ENCODE measurements at regions of chr11 and their contacts with region 1.

Region 1: DNA sequence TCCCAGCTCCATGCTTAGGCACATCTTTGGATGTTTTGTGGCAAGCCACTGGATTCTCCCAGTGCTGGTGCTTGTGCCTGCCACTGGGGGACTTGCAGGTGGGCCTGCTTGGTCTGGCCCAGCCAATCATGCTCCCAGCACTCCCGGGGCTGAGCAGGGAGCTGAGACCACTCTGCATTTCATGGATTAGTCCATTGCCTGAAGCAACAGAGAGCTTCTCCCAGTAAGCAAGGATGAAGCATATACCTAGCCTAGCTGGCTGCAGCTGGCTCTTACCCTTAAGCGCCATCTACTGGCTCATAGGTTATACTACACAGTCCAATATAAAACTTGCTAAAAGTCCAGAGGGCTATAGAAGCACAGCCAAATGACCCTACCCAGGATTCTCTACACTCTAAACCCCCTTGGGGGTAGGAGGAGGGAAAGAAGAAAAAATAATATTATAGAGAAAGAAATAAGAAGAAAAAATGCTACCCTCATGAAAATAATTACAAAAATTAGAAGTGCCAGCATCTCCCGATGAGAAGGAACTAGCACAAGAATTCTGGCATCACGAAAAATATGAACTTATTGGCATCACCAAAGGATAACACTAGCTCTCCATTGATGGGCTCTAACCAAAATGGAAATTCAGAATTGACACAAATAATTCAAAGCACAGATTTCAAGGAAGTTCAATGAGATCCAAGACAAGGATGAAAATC is 275.3 kb downstream of the C11orf87 start:
- DNase-seq: peak; percentile 69
- H3K4me3 Mint-ChIP-seq: no peak overlapping the region
- H3K27ac Mint-ChIP-seq: peak overlapping the region; percentile 72
- H3K4me1 Mint-ChIP-seq: peaks cover 6% of the 10 kb centered on the region
- H3K27me3 Mint-ChIP-seq: no peaks in the 10 kb centered on the region
- CTCF ChIP-seq: peak; percentile 60

Region 2: GRCh38 chr11:108788565-108789199 is 908.6 kb before region 1 on chr11:
- CTCF ChIA-PET with region 1: no interaction called
- POLR2A ChIA-PET with region 1: no interaction called
- intact Hi-C with region 1: loop called (anchors 2 kb)
- DNase-seq: peak; percentile 40
- H3K4me3 Mint-ChIP-seq: no peak overlapping the region
- H3K27ac Mint-ChIP-seq: peak overlapping the region; percentile 39
- H3K4me1 Mint-ChIP-seq: peaks cover 9% of the 10 kb centered on the region
- H3K27me3 Mint-ChIP-seq: no peaks in the 10 kb centered on the region
- CTCF ChIP-seq: peak; percentile 42

Region 3: GRCh38 chr11:108871152-108871551 is 826.1 kb before region 1 on chr11:
- CTCF ChIA-PET with region 1: no interaction called
- POLR2A ChIA-PET with region 1: interaction called, 3 read pairs
- intact Hi-C with region 1: loop called (anchors 2 kb)
- DNase-seq: peak; percentile 67
- H3K4me3 Mint-ChIP-seq: no peak overlapping the region
- H3K27ac Mint-ChIP-seq: peak overlapping the region; percentile 29
- H3K4me1 Mint-ChIP-seq: peaks cover 32% of the 10 kb centered on the region
- H3K27me3 Mint-ChIP-seq: no peaks in the 10 kb centered on the region
- CTCF ChIP-seq: peak; percentile 53

Region 4: GRCh38 chr11:108929241-108929640 is 768.1 kb before region 1 on chr11:
- CTCF ChIA-PET with region 1: no interaction called
- POLR2A ChIA-PET with region 1: no interaction called
- intact Hi-C with region 1: loop called (anchors 10 kb)
- DNase-seq: peak; percentile 86
- H3K4me3 Mint-ChIP-seq: peak overlapping the region; percentile 46
- H3K27ac Mint-ChIP-seq: peak overlapping the region; percentile 97
- H3K4me1 Mint-ChIP-seq: peaks cover 54% of the 10 kb centered on the region
- H3K27me3 Mint-ChIP-seq: no peaks in the 10 kb centered on the region
- CTCF ChIP-seq: no peak

Region 5: DNA sequence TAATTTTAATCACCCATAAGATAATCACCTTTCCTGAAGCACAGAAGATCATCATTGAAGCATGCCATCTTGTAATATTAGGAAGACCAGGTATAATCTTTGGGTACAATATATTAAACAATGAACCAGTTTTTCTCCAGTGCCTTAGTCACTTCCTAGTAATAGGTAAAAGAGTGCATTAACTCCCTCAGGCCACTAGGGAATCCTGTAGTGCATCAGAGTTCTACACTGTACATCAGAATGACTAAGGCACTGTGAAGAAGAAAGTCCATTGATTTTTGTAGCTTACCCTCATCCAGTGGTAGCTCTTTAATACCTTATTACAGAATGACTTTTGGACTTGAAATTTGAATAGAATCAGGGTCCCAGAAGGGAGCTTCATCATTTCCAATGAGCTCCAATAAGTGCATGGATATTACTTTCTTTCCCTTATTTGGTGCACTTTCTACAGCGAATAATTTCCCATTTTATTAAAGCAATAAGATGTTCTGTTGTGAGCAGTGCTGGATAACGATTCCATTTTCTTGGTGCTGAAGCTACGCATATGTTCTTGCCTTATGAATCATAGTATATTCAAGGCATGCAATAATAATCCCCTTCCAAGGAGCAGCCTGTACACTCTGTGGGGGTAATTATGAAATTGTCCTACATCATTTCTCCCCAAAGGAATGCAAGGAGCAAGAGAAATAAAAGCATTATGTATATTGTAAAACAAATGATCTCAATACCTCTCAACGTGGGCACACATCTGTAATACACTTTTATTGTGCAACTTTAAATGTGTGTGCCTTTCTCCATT is 270.7 kb before region 1 on chr11:
- CTCF ChIA-PET with region 1: no interaction called
- POLR2A ChIA-PET with region 1: no interaction called
- intact Hi-C with region 1: loop called (anchors 5 kb)
- DNase-seq: peak; percentile 34
- H3K4me3 Mint-ChIP-seq: no peak overlapping the region
- H3K27ac Mint-ChIP-seq: no peak overlapping the region
- H3K4me1 Mint-ChIP-seq: peaks cover 8% of the 10 kb centered on the region
- H3K27me3 Mint-ChIP-seq: peaks cover 26% of the 10 kb centered on the region
- CTCF ChIP-seq: peak; percentile 16

Measured in MCF 10A (cell line).